ENCODE measurements at regions of chr7 and their contacts with region 1.

Region 1: GRCh38 chr7:139159900-139160675 is 50.6 kb upstream of the ZC3HAV1 start:
- DNase-seq: no peak
- ATAC-seq: no peak
- H3K4me3 ChIP-seq: no peak overlapping the region
- H3K27ac ChIP-seq: no peak overlapping the region
- H3K4me1 ChIP-seq: no peaks in the 10 kb centered on the region
- H3K27me3 ChIP-seq: no peaks in the 10 kb centered on the region
- CTCF ChIP-seq: no peak
- POLR2A ChIP-seq: no peak

Region 2: GRCh38 chr7:139183878-139184338 is 23.8 kb after region 1 on chr7:
- intact Hi-C with region 1: no loop called
- DNase-seq: no peak
- ATAC-seq: no peak
- H3K4me3 ChIP-seq: no peak overlapping the region
- H3K27ac ChIP-seq: no peak overlapping the region
- H3K4me1 ChIP-seq: no peaks in the 10 kb centered on the region
- H3K27me3 ChIP-seq: no peaks in the 10 kb centered on the region
- CTCF ChIP-seq: no peak
- POLR2A ChIP-seq: no peak

Region 3: GRCh38 chr7:139224219-139224618 is 64.1 kb after region 1 on chr7:
- intact Hi-C with region 1: loop called in 1 of 10 experiments (anchors 10 kb)
- DNase-seq: no peak
- ATAC-seq: no peak
- H3K4me3 ChIP-seq: no peak overlapping the region
- H3K27ac ChIP-seq: no peak overlapping the region
- H3K4me1 ChIP-seq: no peaks in the 10 kb centered on the region
- H3K27me3 ChIP-seq: no peaks in the 10 kb centered on the region
- CTCF ChIP-seq: no peak
- POLR2A ChIP-seq: no peak

Region 4: DNA sequence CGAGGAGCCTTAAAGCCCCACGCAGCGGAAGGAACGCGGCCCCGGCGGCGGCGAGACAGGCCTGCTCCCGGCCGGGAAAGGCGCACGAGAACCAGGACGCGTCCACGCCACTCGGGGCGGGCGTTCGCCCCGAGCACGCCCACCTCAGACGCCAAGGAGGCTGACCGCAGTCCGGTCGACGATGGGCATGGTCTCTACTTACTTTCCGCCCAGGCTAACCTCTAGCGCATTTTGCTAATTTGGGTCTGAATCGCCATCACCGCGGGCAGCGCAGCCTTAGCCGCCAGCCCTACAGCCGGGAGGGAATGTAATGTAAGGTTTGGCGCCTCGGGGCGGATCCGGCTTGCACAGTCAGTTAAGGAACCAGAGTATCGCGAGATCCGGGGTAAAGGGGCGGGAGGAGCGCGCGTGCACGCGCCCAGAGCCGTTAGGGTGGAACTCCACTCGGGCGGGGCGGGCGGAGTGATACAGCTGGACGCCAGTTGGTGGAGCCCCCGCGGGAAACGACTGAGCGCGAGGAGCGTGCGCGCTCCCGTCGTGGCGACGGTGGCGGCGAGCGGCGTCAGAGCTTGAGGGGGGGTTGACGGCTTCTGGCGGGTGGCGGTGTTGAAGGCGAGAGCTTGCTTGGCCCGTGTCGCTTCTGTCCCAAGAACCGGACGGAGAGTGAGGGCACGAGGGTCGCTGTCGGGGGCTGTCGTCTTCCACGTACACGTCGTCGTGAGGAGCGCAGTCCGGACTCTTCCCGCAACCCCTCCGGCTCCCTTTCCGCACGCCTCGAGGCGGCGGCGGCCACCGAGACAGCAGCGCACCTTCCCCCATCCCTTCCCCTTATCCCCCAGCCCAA is 199.5 kb after region 1 on chr7 and contains the start of gene LUC7L2:
- intact Hi-C with region 1: no loop called
- DNase-seq: peak; percentile 100
- ATAC-seq: peak; percentile 96 to 97 (median 96)
- H3K4me3 ChIP-seq: peak within 1 kb of the TSS; percentile 79 to 100 (median 92)
- H3K27ac ChIP-seq: peak within 1 kb of the TSS; percentile 95 to 100 (median 99)
- H3K4me1 ChIP-seq: peaks cover 5 to 47% (median 32%) of the 10 kb centered on the region in 12 donors
- H3K27me3 ChIP-seq: no peaks in the 10 kb centered on the region
- CTCF ChIP-seq: peak in 5 of 12 donors; percentile 5 to 32 (median 7)
- POLR2A ChIP-seq: peak; percentile 24 to 85
- total RNA-seq, gene LUC7L2: 29.4 to 55.4 (median 46.3) TPM

Measured in heart left ventricle (tissue), 16 donors.